Activated CD4-positive, alpha-beta T cell treated with anti-CD3 and anti-CD28 coated beads, Interleukin-2, amount 10 ng/mL, durations not matched to agents 7 days and 5 days (primary cell): ENCODE measurements at regions of chr1 and their contacts with region 1.

Region 1: GRCh38 chr1:111399792-111400610 is 27.5 kb downstream of the OVGP1 start:
- DNase-seq: peak; percentile 56
- H3K4me3 Mint-ChIP-seq: no peak overlapping the region
- H3K27ac Mint-ChIP-seq: no peak overlapping the region
- H3K4me1 Mint-ChIP-seq: peaks cover 14% of the 10 kb centered on the region
- H3K27me3 Mint-ChIP-seq: peaks cover 21% of the 10 kb centered on the region

Region 2: DNA sequence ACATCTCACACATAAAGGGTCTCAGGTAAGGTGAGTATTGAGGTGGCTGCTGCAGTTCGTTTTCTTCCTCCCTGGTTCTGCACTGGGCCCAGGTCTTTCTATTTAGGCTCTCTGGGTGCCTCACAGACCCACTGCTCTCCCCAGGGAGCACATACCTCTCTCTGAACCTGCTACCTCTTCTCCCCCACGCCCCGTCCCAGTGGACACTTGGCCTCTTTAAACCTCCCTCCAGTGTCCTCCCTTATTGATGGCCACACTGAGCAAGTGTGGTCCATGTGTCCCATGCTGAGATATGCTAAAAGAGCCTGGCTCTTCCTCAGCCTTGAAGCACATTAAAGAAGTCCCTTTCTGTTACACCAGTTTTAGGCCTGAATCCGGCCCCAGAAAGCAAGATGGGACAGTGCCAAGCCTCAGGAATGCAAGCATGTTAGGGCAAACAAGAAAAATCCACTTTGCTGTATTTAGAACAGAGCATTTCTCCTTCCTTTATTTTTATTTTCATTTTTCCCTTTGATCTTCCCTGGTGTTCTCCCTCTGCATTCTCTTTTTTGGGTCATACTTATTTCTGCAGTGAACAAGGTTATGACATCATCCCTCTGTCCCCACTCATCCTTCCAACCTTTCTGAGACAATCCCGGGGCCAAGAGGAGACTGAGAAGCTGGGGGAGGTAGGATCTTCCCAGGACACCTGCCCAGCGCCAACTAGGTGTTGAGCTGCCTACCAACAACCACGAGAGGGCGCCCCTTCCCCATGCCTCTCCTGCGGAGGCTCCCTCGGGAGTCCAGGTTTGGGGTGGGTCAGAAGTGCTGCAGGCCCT is 177.5 kb before region 1 on chr1:
- CTCF ChIA-PET with region 1: interaction called, 15 read pairs
- POLR2A ChIA-PET with region 1: no interaction called
- DNase-seq: peak; percentile 84
- H3K4me3 Mint-ChIP-seq: peak overlapping the region; percentile 68
- H3K27ac Mint-ChIP-seq: peak overlapping the region; percentile 93
- H3K4me1 Mint-ChIP-seq: peaks cover 92% of the 10 kb centered on the region
- H3K27me3 Mint-ChIP-seq: no peaks in the 10 kb centered on the region

Region 3: GRCh38 chr1:111948209-111949171 is 548.5 kb after region 1 on chr1:
- CTCF ChIA-PET with region 1: no interaction called
- POLR2A ChIA-PET with region 1: no interaction called
- DNase-seq: no peak
- H3K4me3 Mint-ChIP-seq: no peak overlapping the region
- H3K27ac Mint-ChIP-seq: no peak overlapping the region
- H3K4me1 Mint-ChIP-seq: peaks cover 5% of the 10 kb centered on the region
- H3K27me3 Mint-ChIP-seq: peaks cover 12% of the 10 kb centered on the region